ENCODE measurements at regions of chr1 and their contacts with region 1.

Region 1: DNA sequence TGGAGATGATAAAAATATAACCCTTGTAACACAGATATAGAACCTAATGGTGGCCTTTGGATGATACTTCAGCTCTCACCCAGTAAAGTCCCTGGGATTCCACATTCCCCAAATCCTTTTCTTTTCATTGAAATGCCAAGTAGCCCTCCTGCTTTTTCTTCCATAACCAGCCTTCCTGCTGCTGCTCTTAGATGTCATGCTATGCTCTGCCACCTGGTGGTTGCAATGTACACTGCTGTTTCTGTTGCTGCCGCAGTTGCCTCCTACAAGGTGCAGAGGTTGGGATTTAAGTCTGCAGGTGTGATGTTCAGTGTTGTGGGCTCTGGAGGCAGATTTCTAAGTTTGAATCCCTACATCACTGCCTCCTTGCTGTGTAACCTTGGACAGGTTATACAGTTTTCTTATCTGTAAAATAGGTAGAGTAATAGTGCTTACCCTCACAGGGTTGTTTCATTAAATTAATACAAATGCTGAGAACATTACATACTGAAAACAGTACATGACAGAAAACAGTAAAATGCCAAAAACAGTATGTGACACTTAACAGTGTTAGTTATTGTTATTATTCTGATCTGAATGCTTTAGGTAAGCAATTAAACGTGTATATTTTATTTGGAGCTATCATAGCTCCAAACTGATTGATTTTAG is 64.3 kb downstream of the CAMSAP2 start:
- DNase-seq: peak; percentile 70
- ATAC-seq: peak; percentile 98
- H3K4me3 ChIP-seq: no peak overlapping the region
- H3K27ac ChIP-seq: no peak overlapping the region
- H3K4me1 ChIP-seq: no peaks in the 10 kb centered on the region
- H3K27me3 ChIP-seq: no peaks in the 10 kb centered on the region
- CTCF ChIP-seq: peak; percentile 92

Region 2: DNA sequence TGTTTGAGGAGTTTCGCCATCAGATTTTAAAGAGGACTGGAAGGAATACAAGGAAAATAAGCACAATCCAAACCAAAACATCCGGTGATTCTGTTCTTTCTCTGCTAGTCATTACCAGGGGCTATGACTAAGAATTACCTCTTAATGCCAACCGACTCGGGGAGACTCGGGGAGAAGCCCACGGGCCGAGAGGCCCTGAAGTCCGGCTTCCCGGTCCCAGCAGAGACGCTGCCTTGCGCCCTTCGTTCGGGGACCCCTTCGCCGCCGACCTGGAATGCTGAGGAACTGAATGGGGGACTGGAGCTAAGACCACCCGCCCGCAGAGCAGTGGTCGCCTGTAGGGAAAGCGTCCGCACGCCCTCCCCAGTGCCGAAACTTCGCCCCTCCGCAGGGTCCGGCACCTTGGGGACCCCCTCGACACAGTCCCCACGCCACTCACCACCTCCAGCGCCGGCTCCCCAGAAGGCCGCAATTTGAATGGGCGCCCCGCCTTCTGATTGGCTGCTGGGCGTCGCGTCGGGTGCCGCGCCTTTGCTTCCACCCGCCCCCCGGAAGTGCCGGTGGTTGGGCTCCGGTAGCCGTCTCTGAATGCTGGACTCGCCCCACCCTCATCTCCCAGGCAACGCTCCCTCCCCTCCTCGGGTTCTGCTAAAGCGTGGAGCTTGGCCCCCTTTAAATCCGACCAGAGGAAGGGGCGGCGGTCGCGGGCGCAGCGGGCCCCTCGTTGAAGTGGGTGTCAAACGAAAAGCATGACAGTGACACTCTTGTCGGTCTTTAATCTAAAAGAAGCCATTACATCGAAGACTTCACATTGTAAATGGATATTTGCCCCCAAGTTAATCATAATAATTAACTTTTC is 182.5 kb before region 1 on chr1 and contains the start of gene KIF14:
- intact Hi-C with region 1: loop called (anchors 10 kb)
- DNase-seq: peak; percentile 97
- ATAC-seq: peak; percentile 100
- H3K4me3 ChIP-seq: peak within 1 kb of the TSS; percentile 77
- H3K27ac ChIP-seq: peak within 1 kb of the TSS; percentile 73
- H3K4me1 ChIP-seq: peaks cover 4% of the 10 kb centered on the region
- H3K27me3 ChIP-seq: no peaks in the 10 kb centered on the region
- CTCF ChIP-seq: no peak
- total RNA-seq, gene KIF14: 0.23 TPM

Region 3: DNA sequence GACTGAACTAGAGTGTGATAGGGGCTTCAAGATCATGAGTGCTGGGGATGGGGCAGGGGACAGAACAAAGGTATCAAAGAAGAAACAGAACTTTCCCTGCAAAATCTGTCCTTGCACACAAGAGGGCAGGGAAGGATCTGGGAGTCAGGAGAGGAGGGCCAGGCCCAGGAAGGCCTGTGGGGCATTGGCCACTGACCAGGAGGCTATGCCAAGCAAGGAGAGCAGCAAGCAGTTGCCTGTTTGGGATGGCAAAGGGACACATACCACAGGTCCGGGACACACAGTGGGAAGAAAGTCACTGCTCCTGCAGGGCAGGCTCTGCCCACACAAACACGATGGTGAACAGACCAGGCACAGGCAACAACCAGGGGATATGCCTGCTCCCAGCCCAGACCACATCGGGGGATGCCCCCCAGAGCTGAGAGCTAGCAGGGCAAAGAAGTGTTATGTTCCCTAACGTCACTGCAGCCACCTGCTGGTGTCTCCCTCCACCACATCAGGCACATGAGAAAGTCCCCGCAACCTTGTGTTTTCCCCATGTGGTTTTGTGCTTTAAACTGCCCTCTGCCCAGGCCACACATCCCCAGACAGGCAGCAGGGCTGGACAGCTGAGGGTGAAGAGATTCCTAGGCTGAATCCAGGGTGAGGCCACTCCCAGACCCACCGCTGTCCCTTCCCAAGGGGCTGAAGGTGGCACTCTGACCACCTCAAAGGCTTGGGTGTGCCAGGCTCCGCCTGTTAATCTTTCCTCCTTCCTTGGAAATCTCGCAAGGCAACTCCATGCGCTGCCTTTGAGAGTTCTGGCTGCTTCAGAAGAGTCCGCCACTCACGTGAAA is 167.0 kb after region 1 on chr1:
- intact Hi-C with region 1: no loop called
- DNase-seq: no peak
- ATAC-seq: no peak
- H3K4me3 ChIP-seq: no peak overlapping the region
- H3K27ac ChIP-seq: no peak overlapping the region
- H3K4me1 ChIP-seq: peaks cover 4% of the 10 kb centered on the region
- H3K27me3 ChIP-seq: no peaks in the 10 kb centered on the region
- CTCF ChIP-seq: no peak

Measured in upper lobe of right lung (tissue), 1 donor.